ENCODE measurements at regions of chr6 and their contacts with region 1.

Region 1: DNA sequence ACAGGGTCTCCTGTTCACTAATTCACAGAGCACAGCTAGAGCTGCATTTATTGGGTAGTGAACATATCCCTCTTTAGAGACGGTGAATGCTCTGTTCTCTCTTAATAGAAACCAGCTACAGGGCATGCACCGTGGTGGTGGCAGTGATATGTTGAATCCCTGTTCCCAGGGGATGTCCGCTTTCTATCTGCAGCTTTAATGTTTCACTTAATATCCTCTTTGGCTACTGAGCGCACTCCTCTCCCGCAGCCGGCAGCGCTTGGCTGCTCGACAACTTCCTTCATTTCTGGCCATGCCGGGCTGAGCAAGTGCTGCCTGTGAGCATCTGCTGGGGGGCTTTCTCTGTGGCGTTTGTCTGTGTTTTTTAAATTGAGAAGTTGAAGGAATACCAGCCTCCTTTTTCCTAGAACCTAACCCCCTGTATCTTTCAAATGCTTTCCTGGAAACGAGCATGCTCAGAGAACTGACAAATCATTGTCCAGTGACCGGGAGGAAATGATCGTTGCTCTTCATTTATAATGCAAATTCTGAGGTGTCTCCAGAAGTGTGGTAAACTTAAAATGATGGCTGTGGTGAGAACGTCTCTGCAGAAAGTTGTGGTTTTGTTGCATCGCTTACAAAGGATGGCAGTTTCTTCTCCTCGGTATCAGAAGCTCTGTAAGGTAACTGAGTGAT is 297.9 kb downstream of the UTRN start:
- DNase-seq: peak; percentile 29
- ATAC-seq: peak; percentile 80
- H3K4me3 Mint-ChIP-seq: peak overlapping the region; percentile 81
- H3K27ac Mint-ChIP-seq: peak overlapping the region; percentile 59
- H3K4me1 Mint-ChIP-seq: peaks cover 30% of the 10 kb centered on the region
- H3K27me3 Mint-ChIP-seq: no peaks in the 10 kb centered on the region
- CTCF ChIP-seq: no peak

Region 2: DNA sequence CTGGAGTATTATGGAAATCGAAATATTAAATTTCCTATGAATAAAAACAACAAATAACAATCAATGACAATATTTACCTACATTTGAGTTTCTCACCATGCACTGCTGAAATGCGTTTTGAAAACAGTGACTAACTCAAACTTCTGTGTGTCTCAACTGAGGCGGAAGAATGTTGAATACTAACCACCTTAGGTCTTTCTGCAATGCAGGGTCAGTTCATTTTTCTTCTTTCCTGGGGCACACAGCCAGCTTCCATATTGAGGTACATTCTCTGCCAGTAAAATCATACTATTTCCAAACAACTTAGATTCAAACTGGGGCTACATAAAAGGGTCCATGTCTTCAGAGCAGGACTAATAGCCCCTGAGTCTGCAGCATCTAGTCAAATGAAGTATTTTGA is 12.2 kb after region 1 on chr6:
- CTCF ChIA-PET with region 1: interaction called, 13 read pairs
- POLR2A ChIA-PET with region 1: no interaction called
- intact Hi-C with region 1: no loop called
- DNase-seq: no peak
- ATAC-seq: no peak
- H3K4me3 Mint-ChIP-seq: no peak overlapping the region
- H3K27ac Mint-ChIP-seq: no peak overlapping the region
- H3K4me1 Mint-ChIP-seq: peaks cover 2% of the 10 kb centered on the region
- H3K27me3 Mint-ChIP-seq: no peaks in the 10 kb centered on the region
- CTCF ChIP-seq: no peak

Region 3: GRCh38 chr6:144726129-144726522 is 143.1 kb after region 1 on chr6:
- CTCF ChIA-PET with region 1: interaction called, 3 read pairs
- POLR2A ChIA-PET with region 1: no interaction called
- intact Hi-C with region 1: loop called (anchors 10 kb)
- DNase-seq: no peak
- ATAC-seq: peak; percentile 21
- H3K4me3 Mint-ChIP-seq: no peak overlapping the region
- H3K27ac Mint-ChIP-seq: peak overlapping the region; percentile 57
- H3K4me1 Mint-ChIP-seq: peaks cover 32% of the 10 kb centered on the region
- H3K27me3 Mint-ChIP-seq: no peaks in the 10 kb centered on the region
- CTCF ChIP-seq: no peak

Region 4: GRCh38 chr6:144931172-144932035 is 348.3 kb after region 1 on chr6:
- CTCF ChIA-PET with region 1: interaction called, 6 read pairs
- POLR2A ChIA-PET with region 1: no interaction called
- intact Hi-C with region 1: loop called (anchors 1 kb)
- DNase-seq: no peak
- ATAC-seq: no peak
- H3K4me3 Mint-ChIP-seq: no peak overlapping the region
- H3K27ac Mint-ChIP-seq: no peak overlapping the region
- H3K4me1 Mint-ChIP-seq: no peaks in the 10 kb centered on the region
- H3K27me3 Mint-ChIP-seq: peaks cover 5% of the 10 kb centered on the region
- CTCF ChIP-seq: no peak

Region 5: DNA sequence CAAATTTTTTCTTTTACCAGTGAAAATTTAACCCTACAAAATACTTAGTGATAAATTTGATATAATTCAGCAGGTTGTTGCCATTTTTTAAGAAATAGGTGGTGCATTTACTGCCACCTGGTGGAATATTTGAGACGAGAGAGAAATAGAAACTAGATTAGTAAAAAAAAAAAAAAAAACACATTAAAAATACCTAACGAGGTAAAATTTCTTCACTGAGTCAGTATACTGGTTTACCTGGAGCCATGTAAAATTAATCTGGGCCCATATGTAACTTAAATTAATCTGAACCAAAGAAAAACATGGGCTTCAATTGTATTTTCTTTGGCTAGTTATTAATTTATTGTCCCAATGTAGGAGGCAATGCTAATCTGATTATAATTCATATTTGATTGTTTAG is 631.5 kb after region 1 on chr6:
- CTCF ChIA-PET with region 1: interaction called, 3 read pairs
- POLR2A ChIA-PET with region 1: no interaction called
- intact Hi-C with region 1: loop called (anchors 1 kb)
- DNase-seq: no peak
- ATAC-seq: no peak
- H3K4me3 Mint-ChIP-seq: no peak overlapping the region
- H3K27ac Mint-ChIP-seq: no peak overlapping the region
- H3K4me1 Mint-ChIP-seq: peaks cover 15% of the 10 kb centered on the region
- H3K27me3 Mint-ChIP-seq: no peaks in the 10 kb centered on the region
- CTCF ChIP-seq: no peak

Region 6: GRCh38 chr6:145704143-145704781 is 1121.2 kb after region 1 on chr6:
- CTCF ChIA-PET with region 1: no interaction called
- POLR2A ChIA-PET with region 1: no interaction called
- intact Hi-C with region 1: loop called (anchors 5 kb)
- DNase-seq: no peak
- ATAC-seq: no peak
- H3K4me3 Mint-ChIP-seq: no peak overlapping the region
- H3K27ac Mint-ChIP-seq: no peak overlapping the region
- H3K4me1 Mint-ChIP-seq: peaks cover 5% of the 10 kb centered on the region
- H3K27me3 Mint-ChIP-seq: no peaks in the 10 kb centered on the region
- CTCF ChIP-seq: no peak